ENCODE measurements at regions of chr2 and their contacts with region 1.

Region 1: GRCh38 chr2:196160101-196160500 is 11.3 kb downstream of the STK17B start:
- DNase-seq: peak; percentile 93
- H3K4me3 Mint-ChIP-seq: peak overlapping the region; percentile 86
- H3K27ac Mint-ChIP-seq: peak overlapping the region; percentile 88
- H3K4me1 Mint-ChIP-seq: peaks cover 60% of the 10 kb centered on the region
- H3K27me3 Mint-ChIP-seq: no peaks in the 10 kb centered on the region

Region 2: GRCh38 chr2:195559431-195559914 is 600.6 kb before region 1 on chr2:
- intact Hi-C with region 1: loop called (anchors 5 kb)
- DNase-seq: peak; percentile 95
- H3K4me3 Mint-ChIP-seq: peak overlapping the region; percentile 81
- H3K27ac Mint-ChIP-seq: peak overlapping the region; percentile 97
- H3K4me1 Mint-ChIP-seq: peaks cover 51% of the 10 kb centered on the region
- H3K27me3 Mint-ChIP-seq: no peaks in the 10 kb centered on the region

Region 3: DNA sequence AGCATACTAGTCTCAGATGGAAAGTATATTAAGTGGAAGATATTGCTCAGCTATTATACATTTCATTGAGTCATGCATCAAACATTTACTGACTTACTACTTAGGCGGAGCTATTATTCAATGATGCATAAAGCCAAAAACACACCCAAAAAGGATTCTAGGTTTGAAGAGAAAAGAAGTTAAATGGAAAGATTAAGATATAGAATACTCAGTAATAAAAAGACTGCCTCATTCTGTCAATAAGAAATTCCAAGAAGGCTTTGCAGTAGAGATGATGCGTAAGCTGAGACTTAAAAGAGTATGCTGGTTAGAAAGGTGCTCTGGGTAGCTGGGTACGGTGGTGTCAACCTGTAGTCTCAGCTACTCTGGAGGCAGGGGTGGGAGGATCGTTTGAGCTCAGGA is 16.4 kb before region 1 on chr2:
- intact Hi-C with region 1: loop called (anchors 1 kb)
- DNase-seq: no peak
- H3K4me3 Mint-ChIP-seq: peak overlapping the region; percentile 31
- H3K27ac Mint-ChIP-seq: peak overlapping the region; percentile 88
- H3K4me1 Mint-ChIP-seq: peaks cover 45% of the 10 kb centered on the region
- H3K27me3 Mint-ChIP-seq: no peaks in the 10 kb centered on the region

Region 4: GRCh38 chr2:196171248-196171871 is 11.3 kb after region 1 on chr2 and contains the start of gene STK17B:
- intact Hi-C with region 1: loop called (anchors 1 kb)
- DNase-seq: peak; percentile 98
- H3K4me3 Mint-ChIP-seq: peak within 1 kb of the TSS; percentile 93
- H3K27ac Mint-ChIP-seq: peak within 1 kb of the TSS; percentile 99
- H3K4me1 Mint-ChIP-seq: peaks cover 40% of the 10 kb centered on the region
- H3K27me3 Mint-ChIP-seq: no peaks in the 10 kb centered on the region
- total RNA-seq, gene STK17B: 129 and 131 TPM in 2 replicates

Region 5: GRCh38 chr2:196208915-196209314 is 48.8 kb after region 1 on chr2:
- intact Hi-C with region 1: no loop called
- DNase-seq: no peak
- H3K4me3 Mint-ChIP-seq: no peak overlapping the region
- H3K27ac Mint-ChIP-seq: peak overlapping the region; percentile 8
- H3K4me1 Mint-ChIP-seq: peaks cover 37% of the 10 kb centered on the region
- H3K27me3 Mint-ChIP-seq: no peaks in the 10 kb centered on the region

Region 6: GRCh38 chr2:197216361-197216979 is 1056.4 kb after region 1 on chr2:
- intact Hi-C with region 1: loop called (anchors 10 kb)
- DNase-seq: peak; percentile 72
- H3K4me3 Mint-ChIP-seq: peak overlapping the region; percentile 80
- H3K27ac Mint-ChIP-seq: peak overlapping the region; percentile 93
- H3K4me1 Mint-ChIP-seq: peaks cover 71% of the 10 kb centered on the region
- H3K27me3 Mint-ChIP-seq: no peaks in the 10 kb centered on the region

Measured in activated CD4-positive, alpha-beta T cell treated with anti-CD3 and anti-CD28 coated beads, Interleukin-2, amount 10 ng/mL, durations not matched to agents 24 days and 14 days (primary cell).